ENCODE measurements at regions of chr14 and their contacts with region 1.

Region 1: DNA sequence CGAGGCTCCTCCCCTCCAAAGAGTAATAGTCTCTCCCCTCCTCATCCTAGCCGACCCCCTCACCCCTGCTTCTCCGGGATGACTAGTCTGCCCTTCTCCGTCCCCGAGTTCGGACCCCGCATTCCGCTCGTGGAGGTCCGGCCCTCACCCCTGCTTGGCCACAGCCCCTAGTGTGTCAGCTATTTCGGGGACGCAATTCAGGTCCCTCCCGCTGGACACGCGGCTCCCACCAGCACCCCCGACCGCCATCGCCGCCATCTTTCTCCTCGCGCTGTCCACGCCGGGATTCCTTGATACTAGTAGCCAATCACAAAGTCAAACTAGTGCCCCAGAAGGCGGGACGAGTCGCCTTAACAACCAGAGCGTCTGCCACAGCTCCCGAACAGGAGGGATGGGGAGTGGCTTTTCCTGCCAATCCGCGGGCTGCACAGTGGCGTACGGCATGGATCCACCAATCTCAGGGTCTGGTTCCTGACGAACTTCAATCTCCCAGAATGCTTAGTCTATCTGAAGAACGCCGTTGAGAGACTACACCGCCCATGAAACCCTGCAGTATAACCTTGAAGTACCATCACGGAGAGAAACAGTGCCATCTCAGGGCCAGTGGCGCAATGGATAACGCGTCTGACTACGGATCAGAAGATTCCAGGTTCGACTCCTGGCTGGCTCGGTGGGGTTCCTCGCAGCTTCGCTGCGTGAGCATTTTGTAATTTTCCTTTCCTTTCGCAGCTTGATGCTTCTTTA is at the start of gene PRMT5:
- DNase-seq: peak; percentile 91
- H3K4me3 ChIP-seq: peak within 1 kb of the TSS; percentile 83 to 84
- H3K27ac ChIP-seq: peak within 1 kb of the TSS; percentile 85 to 89
- H3K4me1 ChIP-seq: peaks cover 9 to 12% of the 10 kb centered on the region in 2 experiments; a peak in 2 of 4 replicates
- H3K27me3 ChIP-seq: no peaks in the 10 kb centered on the region
- CTCF ChIP-seq: no peak
- EP300 ChIP-seq: peak in 1 of 2 experiments; percentile 70; a peak in 1 of 4 replicates
- RAD21 ChIP-seq: no peak
- polyA plus RNA-seq, gene PRMT5: 132 and 174 TPM in 2 replicates

Region 2: DNA sequence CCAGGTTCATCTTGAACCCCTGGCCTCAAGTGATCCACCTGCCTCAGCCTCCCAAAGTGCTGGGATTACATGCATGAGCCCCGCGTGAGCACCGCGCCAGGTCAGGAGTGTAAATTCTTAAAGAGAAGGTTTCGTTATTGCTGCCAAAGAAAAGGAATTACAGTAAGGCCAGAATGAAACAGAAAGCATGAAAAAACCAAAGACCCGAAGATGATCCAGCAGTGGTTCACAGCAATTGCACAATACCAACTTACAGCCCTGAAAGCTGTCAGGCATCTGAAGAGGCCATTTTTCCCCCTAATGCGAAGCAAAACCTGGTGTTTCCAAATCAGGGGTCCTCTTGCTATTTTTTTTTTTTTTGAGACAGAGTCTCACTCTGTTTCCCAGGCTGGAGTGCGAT is 20.7 kb before region 1 on chr14:
- CTCF ChIA-PET with region 1: no interaction called
- POLR2A ChIA-PET with region 1: no interaction called
- DNase-seq: no peak
- H3K4me3 ChIP-seq: no peak overlapping the region
- H3K27ac ChIP-seq: no peak overlapping the region
- H3K4me1 ChIP-seq: no peaks in the 10 kb centered on the region
- H3K27me3 ChIP-seq: no peaks in the 10 kb centered on the region
- CTCF ChIP-seq: no peak
- EP300 ChIP-seq: no peak
- RAD21 ChIP-seq: no peak

Region 3: DNA sequence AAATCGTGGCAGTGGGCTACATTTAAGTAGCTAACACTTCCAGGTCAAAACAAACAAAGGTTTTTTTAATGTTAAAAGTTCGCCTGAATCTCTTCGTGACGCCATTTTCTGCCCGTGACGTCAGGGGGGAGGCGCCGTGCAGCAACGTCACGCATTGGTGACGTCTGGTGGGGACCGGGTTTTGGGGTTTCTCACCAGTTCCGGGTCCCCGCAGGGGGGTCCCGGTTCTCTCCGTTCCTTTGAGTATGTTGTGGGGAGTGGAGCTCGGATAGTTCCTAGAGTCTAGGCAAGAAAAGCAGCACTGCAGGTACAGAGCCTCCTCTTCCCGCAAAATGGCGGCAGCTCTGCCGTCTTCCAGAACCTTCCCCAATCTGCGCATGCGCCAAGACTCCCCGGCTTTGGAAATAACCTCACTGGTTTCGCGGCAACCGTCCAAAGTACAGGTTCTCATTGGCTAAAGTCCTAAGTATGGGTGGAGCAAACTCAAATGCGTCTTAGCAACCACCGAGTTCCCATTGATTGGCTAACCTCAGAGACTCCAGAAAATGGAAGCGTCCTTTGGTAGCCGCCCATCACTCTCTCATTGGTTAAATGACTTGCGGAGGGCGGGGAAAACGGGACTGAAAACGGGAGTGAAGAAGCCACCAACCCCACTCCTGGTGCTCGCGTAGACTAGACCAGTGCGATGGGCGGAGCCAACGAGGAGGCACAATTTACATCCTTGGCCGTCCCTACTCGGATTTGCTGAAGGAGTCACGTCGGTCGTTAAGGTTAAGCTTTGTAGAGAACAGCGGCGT is 10.3 kb before region 1 on chr14 and contains the start of gene RBM23:
- CTCF ChIA-PET with region 1: interaction called, 21 read pairs
- POLR2A ChIA-PET with region 1: interaction called, 15 read pairs
- DNase-seq: peak; percentile 87
- H3K4me3 ChIP-seq: peak within 1 kb of the TSS; percentile 77 to 85
- H3K27ac ChIP-seq: peak within 1 kb of the TSS; percentile 97 to 98
- H3K4me1 ChIP-seq: peaks cover 0 to 9% of the 10 kb centered on the region in 2 experiments; a peak in 2 of 4 replicates
- H3K27me3 ChIP-seq: no peaks in the 10 kb centered on the region
- CTCF ChIP-seq: peak; percentile 17; the same call in 1 of the 2 replicates
- EP300 ChIP-seq: no peak
- RAD21 ChIP-seq: no peak
- polyA plus RNA-seq, gene RBM23: 52.4 and 65.5 TPM in 2 replicates

Region 4: GRCh38 chr14:22955702-22956569 is 26.7 kb after region 1 on chr14:
- CTCF ChIA-PET with region 1: interaction called, 16 read pairs
- POLR2A ChIA-PET with region 1: interaction called, 5 read pairs
- DNase-seq: no peak
- H3K4me3 ChIP-seq: peak overlapping the region; percentile 61 to 88
- H3K27ac ChIP-seq: peak overlapping the region; percentile 85 to 86
- H3K4me1 ChIP-seq: peaks cover 4 to 6% of the 10 kb centered on the region in 2 experiments; a peak in 2 of 4 replicates
- H3K27me3 ChIP-seq: no peaks in the 10 kb centered on the region
- CTCF ChIP-seq: no peak
- EP300 ChIP-seq: no peak
- RAD21 ChIP-seq: no peak

Region 5: GRCh38 chr14:22973217-22974032 is 44.1 kb after region 1 on chr14:
- CTCF ChIA-PET with region 1: interaction called, 16 read pairs
- POLR2A ChIA-PET with region 1: interaction called, 3 read pairs
- DNase-seq: peak; percentile 67
- H3K4me3 ChIP-seq: no peak overlapping the region
- H3K27ac ChIP-seq: no peak overlapping the region; a peak in 1 of 4 replicates
- H3K4me1 ChIP-seq: peaks cover 21 to 23% of the 10 kb centered on the region in 2 experiments
- H3K27me3 ChIP-seq: no peaks in the 10 kb centered on the region
- CTCF ChIP-seq: peak; percentile 71
- EP300 ChIP-seq: no peak
- RAD21 ChIP-seq: peak; percentile 88

Region 6: DNA sequence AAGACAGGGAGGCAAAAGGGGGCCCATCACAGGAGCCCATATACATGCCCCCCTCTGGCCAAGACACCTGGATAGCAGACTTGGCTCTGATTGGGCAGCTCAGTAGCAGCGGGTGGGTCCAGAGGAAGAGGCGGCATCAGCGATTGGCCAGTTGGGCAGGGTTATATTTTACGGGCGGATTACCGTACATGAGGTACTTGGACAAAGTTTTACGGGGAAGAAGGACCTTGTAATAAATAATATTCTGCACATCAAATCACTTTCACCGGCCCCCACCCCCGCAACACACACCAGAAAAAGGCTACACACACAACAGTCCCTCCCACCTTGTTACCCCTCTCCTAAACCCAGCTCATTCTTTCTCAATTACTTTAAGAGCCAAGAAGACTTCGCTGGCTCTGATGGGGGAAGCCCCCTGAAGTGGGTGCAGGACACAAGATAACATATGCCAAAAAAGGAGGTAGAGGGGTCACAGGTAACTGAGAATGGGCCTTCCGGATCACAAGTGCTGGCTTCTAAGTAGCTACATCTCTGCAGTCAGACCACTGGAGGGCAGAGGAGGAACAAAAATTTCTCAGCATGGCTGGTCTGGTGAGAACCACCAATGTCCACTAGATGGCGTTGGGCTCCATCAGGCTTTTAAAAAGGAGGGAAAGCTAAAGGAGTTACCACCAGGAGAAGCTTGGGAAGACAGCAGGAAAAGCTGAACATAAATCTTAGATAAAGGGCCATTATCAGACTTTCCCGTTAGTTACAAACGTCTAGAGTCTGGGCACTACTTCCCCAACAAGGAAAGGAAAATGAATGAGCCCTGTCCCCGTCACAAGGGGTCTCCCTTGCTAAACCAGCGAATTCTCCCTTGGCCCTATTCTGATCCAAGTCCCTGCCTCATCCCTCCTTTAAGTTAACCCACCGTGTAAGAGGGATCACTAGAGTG is 139.5 kb after region 1 on chr14:
- CTCF ChIA-PET with region 1: interaction called, 15 read pairs
- POLR2A ChIA-PET with region 1: no interaction called
- DNase-seq: peak; percentile 89
- H3K4me3 ChIP-seq: peak overlapping the region in 1 of 2 experiments; percentile 50; a peak in 1 of 4 replicates
- H3K27ac ChIP-seq: peak overlapping the region; percentile 35 to 40; a peak in 3 of 4 replicates
- H3K4me1 ChIP-seq: peaks cover 20 to 35% of the 10 kb centered on the region in 2 experiments
- H3K27me3 ChIP-seq: no peaks in the 10 kb centered on the region
- CTCF ChIP-seq: peak; percentile 99
- EP300 ChIP-seq: no peak
- RAD21 ChIP-seq: peak; percentile 77

Measured in SK-N-SH (cell line).